Activated T-helper 1 cell treated with anti-CD3 and anti-CD28 coated beads, Interleukin-12 subunit alpha, Interleukin-12 subunit beta, Interleukin-2, Interleukin-4 antibody, amounts not matched to agents 30 ng/mL and 10 ng/mL and 1 ng/mL, durations not matched to agents 14 hours and 24 hours and 36 hours (primary cell): ENCODE measurements at regions of chr12 and their contacts with region 1.

Region 1: DNA sequence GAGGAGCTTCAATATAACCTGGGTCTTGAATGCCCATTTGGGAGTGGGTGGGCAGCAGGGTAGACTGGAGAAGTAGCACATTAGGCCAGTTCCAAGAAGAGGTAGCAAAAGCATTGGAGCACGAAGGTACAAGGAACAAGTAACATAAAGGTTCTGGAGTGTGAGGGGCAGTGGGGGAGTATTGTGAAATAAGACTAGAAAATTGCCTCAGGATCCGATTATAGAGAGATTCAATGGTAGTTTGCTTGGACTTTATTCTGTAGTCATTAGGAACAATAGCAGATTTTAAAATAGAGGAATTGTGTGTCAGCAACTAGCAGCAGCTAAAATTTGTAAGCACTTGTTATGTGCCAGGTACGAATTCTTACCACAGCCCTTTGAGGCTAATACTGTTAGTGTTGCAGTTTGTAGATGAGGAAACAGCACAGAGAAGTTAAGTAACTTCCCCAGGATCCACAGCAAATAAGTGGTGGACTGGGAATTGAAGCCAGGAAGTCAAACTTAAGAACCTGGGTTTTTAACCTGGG is 61.8 kb downstream of the PPFIBP1 start:
- DNase-seq: no peak
- H3K4me3 Mint-ChIP-seq: no peak overlapping the region
- H3K27ac Mint-ChIP-seq: no peak overlapping the region
- H3K4me1 Mint-ChIP-seq: peaks cover 44% of the 10 kb centered on the region
- H3K27me3 Mint-ChIP-seq: no peaks in the 10 kb centered on the region

Region 2: GRCh38 chr12:27534060-27534764 is 51.6 kb before region 1 on chr12:
- intact Hi-C with region 1: no loop called
- DNase-seq: peak; percentile 16
- H3K4me3 Mint-ChIP-seq: peak overlapping the region; percentile 40
- H3K27ac Mint-ChIP-seq: peak overlapping the region; percentile 66
- H3K4me1 Mint-ChIP-seq: peaks cover 77% of the 10 kb centered on the region
- H3K27me3 Mint-ChIP-seq: peaks cover 4% of the 10 kb centered on the region

Region 3: DNA sequence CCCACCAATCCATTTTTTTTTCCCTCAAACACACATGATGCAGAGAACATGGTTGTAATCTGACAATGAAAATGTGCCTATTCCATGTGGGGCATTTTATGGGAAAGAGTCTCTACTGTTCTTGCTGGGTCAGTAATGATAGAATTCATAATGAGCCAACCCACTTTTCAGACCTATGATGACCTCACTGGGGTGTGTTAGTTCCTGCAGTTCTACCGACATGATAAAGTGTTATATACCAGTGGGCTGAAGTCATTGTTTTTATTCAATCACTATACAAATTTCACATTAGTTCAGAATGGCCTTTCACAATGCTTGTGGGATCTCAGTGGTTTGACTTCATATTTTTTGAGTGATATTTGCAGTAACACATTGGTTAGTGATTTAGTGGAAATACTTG is 14.3 kb before region 1 on chr12:
- intact Hi-C with region 1: no loop called
- DNase-seq: no peak
- H3K4me3 Mint-ChIP-seq: no peak overlapping the region
- H3K27ac Mint-ChIP-seq: no peak overlapping the region
- H3K4me1 Mint-ChIP-seq: peaks cover 27% of the 10 kb centered on the region
- H3K27me3 Mint-ChIP-seq: peaks cover 2% of the 10 kb centered on the region

Region 4: DNA sequence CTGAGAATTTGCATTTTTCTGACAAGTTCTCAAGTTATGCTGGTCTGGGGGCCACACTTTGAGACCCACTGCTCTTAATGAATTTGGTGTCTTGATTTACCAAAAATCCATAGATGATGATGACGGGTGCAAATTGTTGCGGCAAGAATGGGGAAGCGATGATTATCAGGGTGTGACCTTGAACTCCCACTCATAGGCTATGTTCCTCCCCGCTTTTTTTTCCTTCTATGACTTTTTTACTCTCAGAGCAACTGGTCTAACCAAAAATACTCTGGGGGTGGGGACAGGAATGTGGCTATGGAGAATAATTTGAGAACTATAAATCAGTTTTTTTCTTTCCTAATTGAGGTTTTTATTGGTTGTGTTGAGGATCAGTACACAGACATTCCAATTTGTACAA is 21.8 kb after region 1 on chr12:
- intact Hi-C with region 1: no loop called
- DNase-seq: no peak
- H3K4me3 Mint-ChIP-seq: no peak overlapping the region
- H3K27ac Mint-ChIP-seq: no peak overlapping the region
- H3K4me1 Mint-ChIP-seq: no peaks in the 10 kb centered on the region
- H3K27me3 Mint-ChIP-seq: peaks cover 1% of the 10 kb centered on the region

Region 5: DNA sequence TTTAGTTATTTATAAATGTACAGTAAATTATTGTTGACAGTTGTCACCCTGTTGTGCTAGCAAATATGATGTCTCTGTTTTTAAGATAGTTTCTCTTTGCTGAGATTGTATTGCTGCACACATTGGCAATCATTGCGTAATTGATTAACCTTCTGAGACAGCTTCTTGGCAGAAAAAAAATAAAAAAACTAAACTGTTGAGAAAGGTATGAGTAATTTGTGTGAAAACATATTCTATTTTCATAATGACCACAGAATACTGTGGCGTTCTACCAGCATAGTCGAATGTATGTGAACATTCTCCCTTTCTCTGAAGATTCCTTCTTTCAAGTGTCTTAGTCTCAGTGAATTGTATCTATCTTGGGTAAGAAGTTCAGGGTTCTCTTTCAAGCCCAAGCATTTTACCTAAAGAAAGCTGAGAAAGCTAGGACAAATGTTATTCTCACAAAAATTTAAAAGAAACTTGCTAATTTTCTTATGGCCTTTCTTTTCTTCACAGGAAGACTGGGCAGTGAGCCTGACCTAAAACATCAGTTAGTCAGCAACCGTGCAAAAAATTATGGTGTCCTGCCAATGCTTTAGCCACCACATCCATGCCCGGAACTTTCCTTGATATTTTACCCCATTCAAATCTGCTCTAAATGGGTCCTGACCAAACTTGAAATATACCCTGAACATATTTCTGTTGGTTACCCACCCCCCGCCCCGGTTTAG is 41.5 kb after region 1 on chr12:
- intact Hi-C with region 1: loop called (anchors 5 kb)
- DNase-seq: no peak
- H3K4me3 Mint-ChIP-seq: no peak overlapping the region
- H3K27ac Mint-ChIP-seq: no peak overlapping the region
- H3K4me1 Mint-ChIP-seq: peaks cover 41% of the 10 kb centered on the region
- H3K27me3 Mint-ChIP-seq: no peaks in the 10 kb centered on the region